ENCODE measurements at regions of chr10 and their contacts with region 1.

Region 1: GRCh38 chr10:109883859-109884771 is 39.2 kb downstream of the XPNPEP1 start:
- DNase-seq: peak; percentile 74 to 83 (median 74)
- ATAC-seq: peak; percentile 96
- H3K4me3 ChIP-seq: no peak overlapping the region
- H3K27ac ChIP-seq: no peak overlapping the region; the same call in 2 of the 3 replicates
- H3K4me1 ChIP-seq: peaks cover 0 to 3% of the 10 kb centered on the region in 2 experiments; a peak in 2 of 5 replicates
- H3K27me3 ChIP-seq: no peaks in the 10 kb centered on the region
- CTCF ChIP-seq: peak; percentile 88 to 94 (median 92)
- EP300 ChIP-seq: no peak
- POLR2A ChIP-seq: no peak
- RAD21 ChIP-seq: peak; percentile 78 to 85

Region 2: GRCh38 chr10:109934958-109935706 is 51.0 kb after region 1 on chr10:
- CTCF ChIA-PET with region 1: no interaction called
- POLR2A ChIA-PET with region 1: no interaction called
- in situ Hi-C with region 1: no loop called
- intact Hi-C with region 1: no loop called
- DNase-seq: no peak
- ATAC-seq: no peak; the same call in 2 of the 3 replicates
- H3K4me3 ChIP-seq: no peak overlapping the region
- H3K27ac ChIP-seq: no peak overlapping the region
- H3K4me1 ChIP-seq: no peaks in the 10 kb centered on the region
- H3K27me3 ChIP-seq: no peaks in the 10 kb centered on the region
- CTCF ChIP-seq: no peak
- EP300 ChIP-seq: no peak
- POLR2A ChIP-seq: no peak
- RAD21 ChIP-seq: no peak

Region 3: DNA sequence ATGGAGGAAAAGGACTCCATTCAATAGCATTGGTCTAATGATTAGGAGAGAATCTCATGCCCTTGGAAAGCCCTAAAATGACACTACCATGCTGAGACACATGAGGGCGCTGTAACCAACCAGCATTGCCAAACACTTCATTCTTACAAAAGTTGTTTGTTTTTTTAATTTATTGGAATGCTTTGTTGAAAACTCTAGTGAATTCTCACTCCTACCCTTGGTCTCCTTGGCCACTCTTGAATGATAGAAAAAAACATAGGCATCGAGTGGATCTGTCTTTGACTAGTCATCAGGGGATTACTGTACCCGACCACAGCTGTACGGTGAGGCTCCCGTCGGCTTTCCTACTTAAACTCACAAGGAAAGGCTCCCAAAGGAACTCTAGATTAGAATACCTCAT is 94.4 kb after region 1 on chr10:
- CTCF ChIA-PET with region 1: no interaction called
- POLR2A ChIA-PET with region 1: no interaction called
- in situ Hi-C with region 1: no loop called
- intact Hi-C with region 1: loop called (anchors 2 kb)
- DNase-seq: peak; percentile 44 to 74 (median 46)
- ATAC-seq: peak; percentile 68
- H3K4me3 ChIP-seq: no peak overlapping the region
- H3K27ac ChIP-seq: peak overlapping the region; percentile 55; the same call in 2 of the 3 replicates
- H3K4me1 ChIP-seq: peaks cover 8 to 21% of the 10 kb centered on the region in 2 experiments; a peak in 4 of 5 replicates
- H3K27me3 ChIP-seq: no peaks in the 10 kb centered on the region
- CTCF ChIP-seq: peak; percentile 63 to 81 (median 77)
- EP300 ChIP-seq: no peak
- POLR2A ChIP-seq: no peak
- RAD21 ChIP-seq: peak; percentile 50 to 74; a peak in 3 of 4 replicates

Region 4: DNA sequence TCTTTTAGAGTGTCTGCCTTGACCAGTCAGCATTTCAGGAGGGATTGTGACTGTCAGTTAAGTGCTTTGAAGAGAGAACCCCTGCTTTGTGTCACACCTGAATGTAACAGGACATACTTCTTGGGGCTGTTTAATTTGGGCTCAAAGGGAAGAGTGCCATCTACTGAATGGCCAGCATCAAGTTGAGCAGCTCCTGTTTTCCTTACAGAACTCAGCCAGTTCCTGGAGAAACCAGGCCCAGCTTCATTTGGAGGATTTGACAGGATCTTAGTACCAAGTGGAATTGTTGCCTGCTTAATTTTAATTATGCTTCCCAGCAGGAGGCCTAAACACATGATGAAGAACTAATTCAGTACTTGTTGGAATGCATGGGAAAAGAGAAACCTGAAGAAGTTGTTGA is 131.9 kb after region 1 on chr10:
- CTCF ChIA-PET with region 1: interaction called, 4 read pairs
- POLR2A ChIA-PET with region 1: no interaction called
- in situ Hi-C with region 1: no loop called
- intact Hi-C with region 1: loop called (anchors 1 kb)
- DNase-seq: no peak
- ATAC-seq: peak; percentile 71
- H3K4me3 ChIP-seq: no peak overlapping the region
- H3K27ac ChIP-seq: no peak overlapping the region
- H3K4me1 ChIP-seq: peaks cover 3 to 6% of the 10 kb centered on the region in 2 experiments; a peak in 4 of 5 replicates
- H3K27me3 ChIP-seq: no peaks in the 10 kb centered on the region
- CTCF ChIP-seq: peak; percentile 24 to 53 (median 37); a peak in 4 of 6 replicates
- EP300 ChIP-seq: no peak
- POLR2A ChIP-seq: no peak
- RAD21 ChIP-seq: peak; percentile 23 to 68; a peak in 3 of 4 replicates

Region 5: GRCh38 chr10:110269374-110270318 is 385.5 kb after region 1 on chr10:
- CTCF ChIA-PET with region 1: no interaction called
- POLR2A ChIA-PET with region 1: no interaction called
- in situ Hi-C with region 1: loop called (anchors 10 kb)
- intact Hi-C with region 1: no loop called
- DNase-seq: no peak
- ATAC-seq: no peak
- H3K4me3 ChIP-seq: no peak overlapping the region
- H3K27ac ChIP-seq: no peak overlapping the region
- H3K4me1 ChIP-seq: peaks cover 0 to 11% of the 10 kb centered on the region in 2 experiments; a peak in 3 of 5 replicates
- H3K27me3 ChIP-seq: no peaks in the 10 kb centered on the region
- CTCF ChIP-seq: no peak
- EP300 ChIP-seq: no peak
- POLR2A ChIP-seq: no peak
- RAD21 ChIP-seq: no peak